Activated CD4-positive, alpha-beta T cell treated with anti-CD3 and anti-CD28 coated beads for 36 hours (primary cell): ENCODE measurements at regions of chr11 and their contacts with region 1.

Region 1: GRCh38 chr11:78139422-78140391 is at the start of gene ALG8:
- DNase-seq: peak; percentile 98
- ATAC-seq: peak; percentile 93
- H3K4me3 Mint-ChIP-seq: peak within 1 kb of the TSS; percentile 86
- H3K27ac Mint-ChIP-seq: peak within 1 kb of the TSS; percentile 95
- H3K4me1 Mint-ChIP-seq: peaks cover 32% of the 10 kb centered on the region
- H3K27me3 Mint-ChIP-seq: no peaks in the 10 kb centered on the region
- total RNA-seq, gene ALG8: 59.4 to 85.2 TPM

Region 2: DNA sequence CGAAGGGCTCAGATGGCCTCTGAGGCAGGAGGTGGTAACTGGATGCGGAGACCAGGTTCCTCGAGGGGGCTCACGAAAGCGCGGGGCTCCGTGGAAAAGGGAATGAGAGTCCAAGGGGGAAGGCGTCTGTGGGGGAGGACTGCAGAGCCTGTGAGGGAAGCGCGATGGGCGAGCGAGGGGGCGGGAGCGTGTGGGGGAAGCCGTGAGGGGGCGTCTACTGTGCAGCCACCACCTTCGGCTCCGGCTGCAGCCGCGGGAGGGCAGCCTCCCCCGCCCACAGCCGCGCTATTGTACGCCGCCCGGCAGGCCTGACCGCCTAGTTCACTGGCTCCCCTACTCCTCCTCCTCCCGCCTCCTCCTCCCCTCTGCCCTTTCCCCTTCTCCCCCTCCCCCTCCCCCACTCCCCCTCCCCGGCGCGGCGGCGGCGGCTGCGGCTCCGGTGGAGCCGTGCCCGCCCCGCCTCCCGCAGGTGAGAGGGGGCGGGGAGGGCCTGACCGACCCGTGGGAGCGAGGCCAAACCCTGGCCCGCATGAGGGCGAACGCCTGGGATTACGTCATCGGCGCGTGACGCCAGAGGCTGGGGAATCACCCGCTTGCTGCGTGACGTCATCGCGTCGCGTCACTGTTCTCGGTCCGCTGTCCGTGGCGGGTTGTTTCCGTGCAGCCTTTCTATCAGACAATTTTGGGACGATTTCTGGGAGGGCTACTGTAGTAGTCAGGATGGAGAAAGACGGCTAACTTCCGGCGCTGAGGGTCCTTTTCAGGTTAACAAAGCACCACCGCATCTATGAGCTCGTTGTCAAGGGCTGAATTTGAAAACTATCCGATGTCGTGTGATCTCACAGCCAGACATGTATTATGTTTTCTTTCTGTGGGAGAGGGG is 665.7 kb before region 1 on chr11 and contains the start of gene PAK1:
- CTCF ChIA-PET with region 1: no interaction called
- POLR2A ChIA-PET with region 1: no interaction called
- intact Hi-C with region 1: loop called in 1 of 2 experiments (anchors 5 kb)
- DNase-seq: peak; percentile 94
- ATAC-seq: peak; percentile 75
- H3K4me3 Mint-ChIP-seq: peak within 1 kb of the TSS; percentile 75
- H3K27ac Mint-ChIP-seq: peak within 1 kb of the TSS; percentile 77
- H3K4me1 Mint-ChIP-seq: peaks cover 4% of the 10 kb centered on the region
- H3K27me3 Mint-ChIP-seq: peaks cover 15% of the 10 kb centered on the region
- total RNA-seq, gene PAK1: 38.2 to 43.9 TPM

Region 3: GRCh38 chr11:77820563-77821348 is 319.0 kb before region 1 on chr11 and contains the starts of genes AAMDC and RSF1:
- CTCF ChIA-PET with region 1: no interaction called
- POLR2A ChIA-PET with region 1: no interaction called
- intact Hi-C with region 1: loop called (anchors 1 to 2 kb)
- DNase-seq: peak; percentile 99
- ATAC-seq: peak; percentile 88
- H3K4me3 Mint-ChIP-seq: peak within 1 kb of the TSS; percentile 97
- H3K27ac Mint-ChIP-seq: peak within 1 kb of the TSS; percentile 98
- H3K4me1 Mint-ChIP-seq: peaks cover 35% of the 10 kb centered on the region
- H3K27me3 Mint-ChIP-seq: no peaks in the 10 kb centered on the region
- total RNA-seq, gene AAMDC: 4.8 to 5.3 TPM
- total RNA-seq, gene RSF1: 49.9 to 59.2 TPM

Region 4: GRCh38 chr11:78079232-78080083 is 60.2 kb before region 1 on chr11 and contains the start of gene NDUFC2:
- CTCF ChIA-PET with region 1: no interaction called
- POLR2A ChIA-PET with region 1: no interaction called
- intact Hi-C with region 1: loop called (anchors 1 to 2 kb)
- DNase-seq: peak; percentile 81
- ATAC-seq: peak; percentile 83
- H3K4me3 Mint-ChIP-seq: peak within 1 kb of the TSS; percentile 91
- H3K27ac Mint-ChIP-seq: peak within 1 kb of the TSS; percentile 90
- H3K4me1 Mint-ChIP-seq: peaks cover 49% of the 10 kb centered on the region
- H3K27me3 Mint-ChIP-seq: no peaks in the 10 kb centered on the region
- total RNA-seq, gene NDUFC2: 214 to 236 TPM

Region 5: GRCh38 chr11:78127401-78127800 is 12.3 kb before region 1 on chr11:
- CTCF ChIA-PET with region 1: no interaction called
- POLR2A ChIA-PET with region 1: no interaction called
- intact Hi-C with region 1: no loop called
- DNase-seq: no peak
- ATAC-seq: no peak
- H3K4me3 Mint-ChIP-seq: no peak overlapping the region
- H3K27ac Mint-ChIP-seq: no peak overlapping the region
- H3K4me1 Mint-ChIP-seq: peaks cover 7% of the 10 kb centered on the region
- H3K27me3 Mint-ChIP-seq: no peaks in the 10 kb centered on the region

Region 6: DNA sequence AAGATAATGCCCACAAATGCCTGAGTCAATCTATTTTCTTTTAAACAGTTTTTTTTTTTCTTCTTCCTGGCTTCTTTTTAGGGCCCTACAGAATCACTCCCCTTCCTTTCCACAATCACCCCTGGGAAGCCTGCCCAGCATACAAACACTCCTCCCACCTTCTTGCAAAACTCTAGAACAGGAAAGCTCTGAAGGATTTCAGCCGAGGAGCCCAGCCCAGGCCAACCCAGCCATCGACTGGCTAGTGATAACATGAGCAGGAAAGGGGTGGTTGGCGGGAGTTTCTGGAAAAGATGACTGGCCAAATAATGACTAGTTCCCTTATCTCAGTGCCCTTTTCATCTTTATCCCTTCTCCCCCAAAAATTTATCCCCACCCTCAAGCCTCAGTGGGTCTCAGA is 117.3 kb after region 1 on chr11:
- CTCF ChIA-PET with region 1: no interaction called
- POLR2A ChIA-PET with region 1: no interaction called
- intact Hi-C with region 1: no loop called
- DNase-seq: no peak
- ATAC-seq: no peak
- H3K4me3 Mint-ChIP-seq: no peak overlapping the region
- H3K27ac Mint-ChIP-seq: no peak overlapping the region
- H3K4me1 Mint-ChIP-seq: no peaks in the 10 kb centered on the region
- H3K27me3 Mint-ChIP-seq: no peaks in the 10 kb centered on the region

Region 7: GRCh38 chr11:78542007-78542406 is 402.3 kb after region 1 on chr11:
- CTCF ChIA-PET with region 1: no interaction called
- POLR2A ChIA-PET with region 1: no interaction called
- intact Hi-C with region 1: no loop called
- DNase-seq: no peak
- ATAC-seq: no peak
- H3K4me3 Mint-ChIP-seq: no peak overlapping the region
- H3K27ac Mint-ChIP-seq: no peak overlapping the region
- H3K4me1 Mint-ChIP-seq: peaks cover 9% of the 10 kb centered on the region
- H3K27me3 Mint-ChIP-seq: no peaks in the 10 kb centered on the region

Region 8: GRCh38 chr11:78564490-78565467 is 425.1 kb after region 1 on chr11:
- CTCF ChIA-PET with region 1: interaction called, 3 read pairs
- POLR2A ChIA-PET with region 1: interaction called, 5 read pairs
- intact Hi-C with region 1: loop called in 1 of 2 experiments (anchors 10 kb)
- DNase-seq: peak; percentile 43
- ATAC-seq: peak; percentile 61
- H3K4me3 Mint-ChIP-seq: no peak overlapping the region
- H3K27ac Mint-ChIP-seq: peak overlapping the region; percentile 59
- H3K4me1 Mint-ChIP-seq: peaks cover 31% of the 10 kb centered on the region
- H3K27me3 Mint-ChIP-seq: no peaks in the 10 kb centered on the region